ENCODE measurements at regions of chr4 and their contacts with region 1.

Region 1: GRCh38 chr4:122617597-122618593 is 3.0 kb downstream of the IL21 start:
- DNase-seq: no peak
- H3K4me3 Mint-ChIP-seq: peak overlapping the region; percentile 17
- H3K27ac Mint-ChIP-seq: peak overlapping the region; percentile 39
- H3K4me1 Mint-ChIP-seq: peaks cover 33% of the 10 kb centered on the region
- H3K27me3 Mint-ChIP-seq: no peaks in the 10 kb centered on the region

Region 2: DNA sequence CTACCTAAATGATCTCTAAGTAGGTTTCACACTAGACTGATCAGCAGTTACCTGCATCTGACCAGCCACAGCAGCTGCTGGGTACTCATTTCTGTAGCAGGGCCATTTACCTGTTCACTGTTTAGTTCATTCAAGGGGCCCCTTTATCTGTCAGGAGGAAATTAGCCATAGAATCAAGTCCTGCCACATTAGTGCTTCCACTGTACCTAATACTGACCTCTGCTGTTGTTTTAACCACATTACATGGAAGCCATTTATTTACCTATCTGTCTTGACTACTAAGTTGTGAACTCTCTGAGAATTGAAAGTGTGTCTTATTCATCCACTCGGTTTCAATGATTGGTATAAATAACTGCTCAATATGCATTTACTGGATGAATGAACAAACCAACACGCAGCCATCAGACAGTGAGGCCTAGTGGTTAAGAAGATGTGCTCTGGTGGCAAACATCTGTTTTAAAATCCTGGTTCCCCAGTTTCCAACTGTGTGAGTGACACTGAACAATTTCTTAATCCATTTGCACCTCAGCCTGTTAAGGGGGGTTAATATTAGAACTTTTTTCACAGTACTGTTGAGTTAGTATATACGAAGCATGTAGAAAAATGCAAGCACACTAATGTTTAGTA is 891.1 kb before region 1 on chr4:
- CTCF ChIA-PET with region 1: no interaction called
- POLR2A ChIA-PET with region 1: no interaction called
- DNase-seq: peak; percentile 35
- H3K4me3 Mint-ChIP-seq: no peak overlapping the region
- H3K27ac Mint-ChIP-seq: no peak overlapping the region
- H3K4me1 Mint-ChIP-seq: peaks cover 3% of the 10 kb centered on the region
- H3K27me3 Mint-ChIP-seq: peaks cover 9% of the 10 kb centered on the region

Region 3: DNA sequence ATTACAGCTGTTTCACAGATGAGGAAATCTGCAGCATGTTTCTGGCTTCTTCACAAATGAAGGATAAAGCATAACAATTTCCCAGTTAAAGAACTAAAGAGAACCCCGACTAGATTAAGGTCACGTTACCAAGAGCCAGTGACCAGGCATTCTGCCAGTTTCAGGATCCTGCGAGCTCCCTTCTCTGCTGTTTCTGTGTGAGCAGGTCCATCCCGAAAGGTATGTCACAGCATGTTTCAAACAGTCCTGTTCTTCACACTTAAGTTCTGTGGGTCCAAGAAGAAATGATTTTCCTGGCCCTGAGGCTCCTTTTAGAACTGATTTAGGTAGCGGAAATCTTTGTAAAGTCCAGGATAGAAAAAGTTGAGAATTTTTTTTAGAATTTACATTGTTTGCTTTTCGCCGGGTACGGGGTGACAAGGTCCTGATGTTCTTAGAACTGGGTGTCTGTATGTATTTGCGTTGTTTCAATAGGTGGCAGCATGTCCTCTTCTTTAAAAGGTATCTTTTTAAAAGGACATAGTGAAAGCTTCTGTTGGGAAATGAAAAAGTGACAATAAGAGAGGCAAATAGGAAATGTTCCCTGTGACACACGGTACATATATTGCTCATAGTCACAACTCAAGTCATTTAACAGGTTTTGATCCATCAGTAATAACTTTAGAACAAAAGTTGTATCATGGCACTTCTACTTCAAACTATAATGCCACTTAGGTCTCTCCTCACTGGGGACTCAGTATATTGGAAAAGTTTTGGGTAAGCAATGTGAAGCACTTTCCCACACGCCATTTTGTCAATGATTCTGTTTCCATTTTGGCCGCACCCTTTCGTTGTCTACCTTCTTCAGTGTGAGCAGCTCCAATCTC is 15.4 kb before region 1 on chr4:
- CTCF ChIA-PET with region 1: interaction called, 13 read pairs
- POLR2A ChIA-PET with region 1: no interaction called
- DNase-seq: peak; percentile 37
- H3K4me3 Mint-ChIP-seq: no peak overlapping the region
- H3K27ac Mint-ChIP-seq: no peak overlapping the region
- H3K4me1 Mint-ChIP-seq: peaks cover 17% of the 10 kb centered on the region
- H3K27me3 Mint-ChIP-seq: peaks cover 6% of the 10 kb centered on the region

Region 4: GRCh38 chr4:122632396-122633143 is 14.7 kb after region 1 on chr4:
- CTCF ChIA-PET with region 1: interaction called, 12 read pairs
- POLR2A ChIA-PET with region 1: no interaction called
- DNase-seq: no peak
- H3K4me3 Mint-ChIP-seq: no peak overlapping the region
- H3K27ac Mint-ChIP-seq: no peak overlapping the region
- H3K4me1 Mint-ChIP-seq: peaks cover 16% of the 10 kb centered on the region
- H3K27me3 Mint-ChIP-seq: no peaks in the 10 kb centered on the region

Region 5: DNA sequence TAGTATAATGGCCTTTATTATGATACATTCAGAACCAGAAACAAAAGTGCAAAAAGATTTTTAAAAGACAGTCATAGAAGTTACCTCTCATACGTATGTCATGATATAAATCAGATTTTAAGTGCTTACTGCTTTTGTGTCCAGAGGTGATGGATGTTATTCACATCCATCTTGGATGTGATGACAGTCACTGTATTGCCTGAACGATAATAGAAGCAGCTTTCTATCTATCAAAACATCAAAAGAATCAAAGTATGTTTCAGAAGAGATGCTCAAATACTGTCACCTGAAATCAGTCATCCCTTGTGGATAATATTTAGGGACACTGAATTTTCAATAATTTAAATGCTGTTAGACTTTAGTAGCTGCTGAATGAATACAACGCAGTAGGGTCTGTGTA is 29.8 kb after region 1 on chr4:
- CTCF ChIA-PET with region 1: no interaction called
- POLR2A ChIA-PET with region 1: no interaction called
- DNase-seq: no peak
- H3K4me3 Mint-ChIP-seq: no peak overlapping the region
- H3K27ac Mint-ChIP-seq: no peak overlapping the region
- H3K4me1 Mint-ChIP-seq: no peaks in the 10 kb centered on the region
- H3K27me3 Mint-ChIP-seq: no peaks in the 10 kb centered on the region